Right ventricle myocardium superior (tissue), 1 donor: ENCODE measurements at regions of chr15 and their contacts with region 1.

Region 1: GRCh38 chr15:85582131-85583079 is 202.0 kb downstream of the AKAP13 start:
- DNase-seq: peak; percentile 63
- ATAC-seq: peak; percentile 57

Region 2: DNA sequence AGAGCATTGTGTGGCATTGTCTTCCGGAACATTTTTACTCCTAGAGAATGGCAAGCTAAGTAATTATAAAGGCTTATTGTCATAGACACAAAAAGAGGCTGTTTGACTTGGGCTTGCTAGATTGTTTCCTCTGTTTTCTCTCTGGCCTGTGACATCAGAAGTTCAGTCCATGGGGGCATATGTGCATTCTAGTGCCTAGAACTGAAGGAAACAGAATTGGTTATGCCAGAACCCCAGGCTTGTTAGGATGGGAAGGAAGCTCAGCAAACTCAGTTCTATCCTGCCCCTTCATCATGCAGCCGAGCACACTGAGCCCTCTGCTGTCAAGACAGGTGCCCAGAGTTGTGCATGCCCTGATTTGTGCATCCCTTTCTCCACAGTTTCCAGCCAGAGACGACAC is 469.4 kb before region 1 on chr15:
- intact Hi-C with region 1: no loop called
- DNase-seq: no peak
- ATAC-seq: no peak

Region 3: DNA sequence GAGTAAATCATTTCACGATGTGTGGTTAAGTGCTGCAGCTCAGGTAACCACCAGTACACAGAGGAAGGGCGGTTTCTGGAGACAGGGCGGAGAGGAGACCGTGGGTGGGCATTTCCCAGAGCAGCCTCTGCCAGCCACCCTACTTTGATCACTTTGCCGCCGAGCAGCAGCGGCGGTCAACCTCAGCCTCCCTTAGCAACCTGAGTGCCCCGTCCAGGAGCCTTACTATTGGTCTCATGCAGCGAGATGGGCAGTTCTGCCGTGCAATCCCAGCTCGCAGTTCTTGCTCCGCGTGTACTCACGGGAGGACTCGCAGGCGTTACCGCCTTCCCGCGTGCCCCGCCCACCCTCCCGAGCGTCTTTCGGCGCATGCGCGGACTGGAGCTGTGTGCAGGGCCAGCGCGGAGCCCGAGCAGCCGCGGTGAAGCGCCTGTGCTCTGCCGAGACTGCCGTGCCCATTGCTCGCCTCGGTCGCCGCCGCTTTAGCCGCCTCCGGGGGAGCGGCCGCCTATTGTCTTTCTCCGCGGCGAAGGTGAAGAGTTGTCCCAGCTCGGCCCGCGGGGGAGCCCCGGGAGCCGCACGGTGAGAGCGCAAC is 202.1 kb before region 1 on chr15 and contains the start of gene AKAP13:
- intact Hi-C with region 1: loop called (anchors 10 kb)
- DNase-seq: peak; percentile 99
- ATAC-seq: peak; percentile 95
- total RNA-seq, gene AKAP13: 322 TPM

Region 4: DNA sequence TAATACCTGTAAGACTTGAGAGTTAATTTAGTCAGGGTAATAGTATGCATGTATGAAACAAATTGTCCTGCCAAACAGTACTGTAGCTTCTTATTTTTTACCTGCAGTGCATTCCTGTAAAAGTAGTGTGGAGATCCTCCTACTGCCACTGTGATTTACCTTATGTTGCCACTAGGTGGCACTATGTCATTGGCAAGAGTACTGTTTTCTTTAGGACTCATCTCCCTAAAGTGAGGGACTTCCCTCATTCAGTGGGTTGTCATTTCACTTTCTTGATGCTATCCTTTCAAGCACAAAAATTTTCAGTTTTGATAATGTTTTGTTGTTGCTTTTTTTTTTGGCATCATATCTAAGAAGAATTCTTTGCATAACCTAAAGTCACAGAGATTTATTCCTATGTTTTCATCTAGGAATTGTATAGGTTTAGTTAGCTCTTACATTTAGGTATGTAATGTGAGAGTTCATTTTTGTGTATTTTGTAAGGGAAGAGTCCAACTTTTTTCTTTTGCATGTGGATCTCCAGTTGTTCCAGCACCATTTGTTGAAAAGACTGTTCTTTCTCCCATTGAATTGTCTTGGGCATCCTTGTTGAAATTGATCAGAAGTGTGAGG is 96.3 kb before region 1 on chr15:
- intact Hi-C with region 1: loop called (anchors 5 kb)
- DNase-seq: no peak
- ATAC-seq: peak; percentile 74